ENCODE measurements at regions of chr19 and their contacts with region 1.

Region 1: GRCh38 chr19:38020311-38020710 is 113.3 kb downstream of the SIPA1L3 start:
- DNase-seq: peak; percentile 84 to 96 (median 93)
- H3K4me3 ChIP-seq: peak overlapping the region in 3 of 7 experiments; percentile 28 to 30 (median 28)
- H3K27ac ChIP-seq: peak overlapping the region; percentile 26 to 72
- H3K4me1 ChIP-seq: peaks cover 15 to 90% (median 83%) of the 10 kb centered on the region in 4 experiments
- H3K27me3 ChIP-seq: no peaks in the 10 kb centered on the region

Region 2: DNA sequence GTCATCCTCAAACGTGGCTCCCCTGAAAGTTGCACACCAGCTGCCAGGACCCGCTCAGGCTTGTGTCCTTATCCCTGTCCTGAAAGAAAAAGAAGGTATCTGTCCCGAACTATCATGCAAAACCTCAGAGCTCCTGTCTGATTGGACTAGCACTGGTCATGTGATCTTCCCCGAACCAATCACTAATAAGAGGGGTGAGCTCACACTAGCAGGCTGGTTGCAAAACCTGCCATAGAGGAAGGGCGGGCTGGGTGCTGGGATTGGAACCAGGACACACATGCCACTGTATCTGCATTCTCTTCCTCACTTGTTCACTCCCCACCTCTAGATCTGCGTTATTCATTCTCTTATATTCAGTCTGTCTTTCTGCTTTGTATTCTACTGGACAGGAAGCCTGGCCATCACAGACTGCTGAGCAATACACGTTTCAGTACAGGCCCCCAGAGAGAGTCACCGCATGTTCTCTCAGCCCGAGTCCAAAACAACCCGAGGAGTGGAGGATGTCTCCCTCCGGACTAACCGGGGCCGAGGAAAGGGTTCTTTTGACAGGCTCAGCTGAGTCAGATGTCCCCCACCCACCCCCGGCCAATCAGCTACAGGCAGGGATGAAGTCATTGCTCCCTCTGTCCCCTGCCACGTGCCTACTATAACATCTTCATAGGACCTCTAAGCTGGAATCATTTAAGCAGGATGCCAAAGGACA is 15.6 kb before region 1 on chr19:
- CTCF ChIA-PET with region 1: interaction called, 23 read pairs
- POLR2A ChIA-PET with region 1: interaction called, 14 read pairs
- DNase-seq: peak; percentile 63 to 81 (median 81)
- H3K4me3 ChIP-seq: peak overlapping the region in 4 of 7 experiments; percentile 64 to 72 (median 69)
- H3K27ac ChIP-seq: peak overlapping the region; percentile 18 to 84
- H3K4me1 ChIP-seq: peaks cover 10 to 53% (median 46%) of the 10 kb centered on the region in 4 experiments
- H3K27me3 ChIP-seq: no peaks in the 10 kb centered on the region

Region 3: DNA sequence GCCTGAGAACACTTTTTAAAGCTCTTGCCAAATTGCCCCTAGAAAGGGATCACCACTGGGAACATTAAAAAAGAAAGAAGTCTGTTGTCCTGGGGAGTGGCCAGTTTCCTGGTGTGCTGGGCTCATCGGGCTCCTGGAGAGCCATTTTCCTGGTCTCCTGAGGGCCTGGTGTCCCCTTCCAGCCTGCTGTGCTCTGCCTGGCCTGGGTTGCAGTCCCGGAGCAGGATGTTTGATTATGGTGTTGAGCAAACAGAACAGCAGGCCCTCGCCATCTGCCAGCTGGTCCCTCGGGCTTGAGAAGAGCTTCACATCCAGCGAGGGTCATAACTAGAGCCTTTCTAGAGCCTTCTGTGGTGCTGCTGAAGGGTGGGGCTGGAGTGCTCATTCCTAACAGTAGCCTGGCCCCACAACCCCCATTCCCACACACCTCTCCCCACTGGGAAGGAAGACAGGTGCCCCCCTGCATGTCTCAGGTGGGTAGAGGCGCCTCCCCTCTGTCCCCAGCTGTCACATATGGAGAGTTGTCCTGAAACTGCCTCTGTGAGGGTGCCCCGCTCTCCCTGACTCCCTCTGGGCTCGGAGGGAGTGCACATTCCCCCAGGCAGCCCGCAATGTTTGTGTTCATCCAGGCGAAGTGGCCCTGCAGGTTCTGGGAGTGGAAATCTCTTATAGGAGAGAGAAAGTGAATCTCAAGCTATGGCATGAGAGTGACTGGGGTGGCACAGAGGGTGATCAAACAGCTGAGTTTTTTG is 37.8 kb after region 1 on chr19:
- CTCF ChIA-PET with region 1: no interaction called
- POLR2A ChIA-PET with region 1: no interaction called
- DNase-seq: no peak
- H3K4me3 ChIP-seq: no peak overlapping the region
- H3K27ac ChIP-seq: peak overlapping the region in 1 of 2 experiments; percentile 25
- H3K4me1 ChIP-seq: peaks cover 0 to 40% (median 22%) of the 10 kb centered on the region in 4 experiments
- H3K27me3 ChIP-seq: no peaks in the 10 kb centered on the region

Region 4: DNA sequence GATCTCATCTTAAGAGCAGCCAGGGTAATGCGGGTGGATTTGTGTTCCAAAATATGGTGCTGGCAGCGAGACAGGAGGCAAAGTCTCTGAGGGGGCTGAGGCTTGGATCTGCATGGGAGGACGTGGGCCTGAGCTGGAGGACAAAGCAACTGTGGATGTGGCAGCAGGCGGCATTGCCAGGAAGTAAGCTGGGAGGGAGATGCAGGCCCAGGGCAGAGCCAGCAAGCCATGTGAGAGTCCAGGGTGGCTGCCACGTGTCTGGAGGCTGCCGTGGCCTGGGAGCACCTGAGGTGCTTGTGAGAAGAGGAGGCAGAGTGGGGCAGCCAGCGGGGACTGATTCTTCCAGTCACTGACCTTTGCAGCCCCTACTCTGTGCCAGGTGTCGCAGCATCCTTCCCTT is 151.7 kb after region 1 on chr19:
- CTCF ChIA-PET with region 1: no interaction called
- POLR2A ChIA-PET with region 1: no interaction called
- DNase-seq: no peak
- H3K4me3 ChIP-seq: no peak overlapping the region
- H3K27ac ChIP-seq: no peak overlapping the region
- H3K4me1 ChIP-seq: peaks cover 0 to 2% (median 0%) of the 10 kb centered on the region in 4 experiments
- H3K27me3 ChIP-seq: no peaks in the 10 kb centered on the region